ENCODE measurements at regions of chr3 and their contacts with region 1.

Region 1: GRCh38 chr3:138915503-138916498 is 31.1 kb downstream of the FOXL2 start:
- H3K4me3 Mint-ChIP-seq: peak overlapping the region; percentile 92
- H3K27ac Mint-ChIP-seq: peak overlapping the region; percentile 98
- H3K4me1 Mint-ChIP-seq: peaks cover 12% of the 10 kb centered on the region
- H3K27me3 Mint-ChIP-seq: peaks cover 2% of the 10 kb centered on the region

Region 2: DNA sequence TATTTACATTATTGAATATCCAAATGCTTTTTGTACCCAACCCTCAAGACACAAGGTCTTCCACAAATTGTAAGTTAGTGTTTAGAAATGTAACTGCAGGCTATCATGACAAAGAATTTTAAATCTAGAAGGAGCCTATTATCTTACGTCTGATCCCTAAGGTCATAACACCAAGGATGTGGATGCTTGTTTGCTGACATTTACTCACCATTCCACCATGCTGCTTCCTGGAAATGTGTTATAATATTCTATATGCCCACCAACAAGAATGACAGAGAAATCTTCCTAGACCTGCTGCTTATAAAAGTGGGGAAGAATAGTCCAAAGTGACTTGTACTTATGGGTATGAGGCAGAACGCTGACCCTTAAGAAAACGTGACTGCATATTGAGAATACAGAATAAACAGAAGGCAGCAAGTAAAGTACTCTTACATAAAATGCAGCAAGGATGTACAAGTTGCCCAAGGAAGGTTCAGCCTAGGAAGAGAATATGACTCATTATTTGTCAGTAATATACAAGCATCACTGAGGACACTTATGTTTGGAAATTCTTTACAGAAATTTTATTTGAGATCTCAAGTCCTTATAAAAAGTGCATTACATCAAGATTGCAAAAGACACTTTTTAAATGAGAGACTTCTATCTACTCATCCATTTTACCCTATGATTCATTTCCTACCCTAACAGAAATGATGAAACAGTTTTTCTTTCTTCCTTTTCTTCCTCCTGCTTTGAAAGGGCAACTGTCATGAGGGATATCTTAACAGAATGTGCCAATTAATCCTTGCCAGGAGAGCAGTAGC is 421.8 kb before region 1 on chr3:
- intact Hi-C with region 1: no loop called
- H3K4me3 Mint-ChIP-seq: no peak overlapping the region
- H3K27ac Mint-ChIP-seq: no peak overlapping the region
- H3K4me1 Mint-ChIP-seq: peaks cover 33% of the 10 kb centered on the region
- H3K27me3 Mint-ChIP-seq: no peaks in the 10 kb centered on the region

Region 3: GRCh38 chr3:138615462-138615861 is 300.3 kb before region 1 on chr3:
- intact Hi-C with region 1: no loop called
- H3K4me3 Mint-ChIP-seq: no peak overlapping the region
- H3K27ac Mint-ChIP-seq: no peak overlapping the region
- H3K4me1 Mint-ChIP-seq: no peaks in the 10 kb centered on the region
- H3K27me3 Mint-ChIP-seq: no peaks in the 10 kb centered on the region

Region 4: DNA sequence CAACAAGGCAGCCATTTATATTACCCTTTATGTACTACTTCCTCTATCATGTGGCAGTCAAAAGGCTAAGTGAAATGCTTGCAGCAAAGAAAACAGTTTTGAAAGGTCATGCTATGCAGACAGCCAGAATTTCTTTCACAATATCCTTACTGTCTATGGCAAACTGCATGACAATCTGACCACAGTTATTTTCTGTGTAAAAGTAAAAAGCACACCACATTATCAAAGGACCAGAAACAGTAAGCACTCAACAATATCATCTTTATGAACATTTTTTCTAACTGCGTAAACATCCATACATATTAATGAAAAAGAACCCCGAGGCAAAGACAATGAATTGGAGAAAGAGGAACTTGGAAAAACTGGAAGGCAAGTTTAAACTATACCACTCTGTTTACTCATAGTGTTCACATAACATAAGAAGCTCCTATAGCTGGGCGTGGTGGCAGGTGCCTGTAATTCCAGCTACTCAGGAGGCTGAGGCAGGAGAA is 129.0 kb before region 1 on chr3:
- intact Hi-C with region 1: loop called (anchors 5 kb)
- H3K4me3 Mint-ChIP-seq: peak overlapping the region; percentile 83
- H3K27ac Mint-ChIP-seq: peak overlapping the region; percentile 91
- H3K4me1 Mint-ChIP-seq: peaks cover 25% of the 10 kb centered on the region
- H3K27me3 Mint-ChIP-seq: no peaks in the 10 kb centered on the region

Region 5: GRCh38 chr3:138818185-138818860 is 97.5 kb before region 1 on chr3:
- intact Hi-C with region 1: loop called (anchors 5 kb)
- H3K4me3 Mint-ChIP-seq: peak overlapping the region; percentile 27
- H3K27ac Mint-ChIP-seq: peak overlapping the region; percentile 80
- H3K4me1 Mint-ChIP-seq: peaks cover 32% of the 10 kb centered on the region
- H3K27me3 Mint-ChIP-seq: no peaks in the 10 kb centered on the region

Region 6: DNA sequence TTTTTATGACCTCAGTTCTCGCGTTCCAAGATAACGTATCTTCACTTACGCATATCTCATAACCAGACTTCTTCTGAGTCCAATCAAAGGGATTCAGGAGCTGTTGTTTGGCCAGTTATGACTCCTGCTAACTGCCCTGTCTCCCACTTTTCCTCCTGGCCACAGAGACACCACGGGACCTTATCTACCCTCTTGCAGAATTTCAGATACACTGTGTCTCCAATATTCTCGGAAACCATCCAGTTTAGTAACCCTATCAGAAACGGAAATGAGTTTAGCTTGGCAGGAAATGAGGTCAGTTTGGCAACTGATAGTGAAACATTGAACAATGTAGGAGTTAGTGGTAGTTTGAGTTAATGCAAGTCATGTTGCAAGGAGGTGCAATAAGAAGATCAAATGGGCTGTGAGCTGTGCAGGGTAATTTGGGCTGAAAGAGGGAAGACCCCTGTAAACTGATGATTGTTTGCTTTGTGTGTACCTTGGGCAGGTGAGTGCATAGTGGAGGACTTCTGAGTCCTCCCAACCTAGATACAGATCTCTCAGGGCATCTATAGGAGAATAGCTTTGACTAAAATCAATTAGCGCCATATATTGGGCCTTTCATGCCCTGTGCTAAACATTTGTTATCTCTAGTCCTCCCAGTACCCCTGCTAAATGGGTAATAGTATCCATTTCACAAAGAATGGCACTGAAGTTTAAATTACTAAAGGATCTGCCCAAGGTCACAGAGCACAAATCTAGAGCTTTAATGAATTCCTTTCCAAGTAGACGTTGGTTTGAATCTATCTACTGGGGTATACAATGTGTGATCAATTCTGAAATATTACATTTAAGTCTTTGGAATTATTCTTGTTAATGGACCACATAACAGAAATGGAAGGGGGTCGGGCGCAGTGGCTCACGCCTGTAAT is 39.8 kb before region 1 on chr3:
- intact Hi-C with region 1: no loop called
- H3K4me3 Mint-ChIP-seq: peak overlapping the region; percentile 33
- H3K27ac Mint-ChIP-seq: peak overlapping the region; percentile 67
- H3K4me1 Mint-ChIP-seq: peaks cover 28% of the 10 kb centered on the region
- H3K27me3 Mint-ChIP-seq: no peaks in the 10 kb centered on the region

Region 7: GRCh38 chr3:139088462-139089324 is 172.9 kb after region 1 on chr3:
- intact Hi-C with region 1: no loop called
- H3K4me3 Mint-ChIP-seq: no peak overlapping the region
- H3K27ac Mint-ChIP-seq: no peak overlapping the region
- H3K4me1 Mint-ChIP-seq: no peaks in the 10 kb centered on the region
- H3K27me3 Mint-ChIP-seq: peaks cover 6% of the 10 kb centered on the region

Measured in dendritic cell treated with granulocyte-macrophage colony-stimulating factor and Interleukin-4, amounts not matched to agents 40 ng/mL and 50 ng/mL, for 4 days (primary cell).